ENCODE measurements at regions of chr12 and their contacts with region 1.

Region 1: GRCh38 chr12:69900720-69901131 is 75.7 kb downstream of the MYRFL start:
- DNase-seq: peak; percentile 72
- H3K4me3 ChIP-seq: no peak overlapping the region
- H3K27ac ChIP-seq: peak overlapping the region; percentile 35
- H3K4me1 ChIP-seq: peaks cover 12% of the 10 kb centered on the region
- H3K27me3 ChIP-seq: no peaks in the 10 kb centered on the region
- CTCF ChIP-seq: peak; percentile 62
- POLR2A ChIP-seq: no peak

Region 2: GRCh38 chr12:69873429-69873828 is 27.3 kb before region 1 on chr12:
- CTCF ChIA-PET with region 1: interaction called, 17 read pairs
- POLR2A ChIA-PET with region 1: no interaction called
- dilution Hi-C with region 1: no loop called
- intact Hi-C with region 1: no loop called
- DNase-seq: peak; percentile 87
- H3K4me3 ChIP-seq: no peak overlapping the region
- H3K27ac ChIP-seq: peak overlapping the region; percentile 68
- H3K4me1 ChIP-seq: peaks cover 14% of the 10 kb centered on the region
- H3K27me3 ChIP-seq: no peaks in the 10 kb centered on the region
- CTCF ChIP-seq: no peak
- POLR2A ChIP-seq: no peak

Region 3: DNA sequence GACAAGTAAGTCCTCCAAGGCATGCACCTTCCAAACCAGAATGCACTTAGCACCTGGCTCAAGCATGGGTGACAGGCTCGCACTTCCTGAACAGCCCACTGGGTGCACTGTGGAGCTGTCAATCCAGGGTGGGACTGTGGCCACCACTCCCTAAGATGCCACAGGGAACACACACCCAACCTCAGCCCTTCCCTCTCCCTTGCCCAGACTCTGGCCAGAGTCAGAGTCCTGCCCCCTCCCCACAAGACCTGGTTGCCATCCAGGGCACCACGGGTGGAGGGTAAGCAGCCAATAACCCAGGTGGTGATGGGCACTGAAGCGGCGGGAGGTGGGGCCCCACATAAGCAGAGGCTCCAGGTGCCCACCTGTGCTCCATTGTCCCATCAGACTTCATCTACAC is 84.9 kb after region 1 on chr12:
- CTCF ChIA-PET with region 1: interaction called, 13 read pairs
- POLR2A ChIA-PET with region 1: no interaction called
- dilution Hi-C with region 1: no loop called
- intact Hi-C with region 1: loop called (anchors 5 kb)
- DNase-seq: no peak
- H3K4me3 ChIP-seq: no peak overlapping the region
- H3K27ac ChIP-seq: no peak overlapping the region
- H3K4me1 ChIP-seq: peaks cover 20% of the 10 kb centered on the region
- H3K27me3 ChIP-seq: peaks cover 0 to 2% of the 10 kb centered on the region in 2 experiments
- CTCF ChIP-seq: peak; percentile 18 to 29
- POLR2A ChIP-seq: no peak

Region 4: DNA sequence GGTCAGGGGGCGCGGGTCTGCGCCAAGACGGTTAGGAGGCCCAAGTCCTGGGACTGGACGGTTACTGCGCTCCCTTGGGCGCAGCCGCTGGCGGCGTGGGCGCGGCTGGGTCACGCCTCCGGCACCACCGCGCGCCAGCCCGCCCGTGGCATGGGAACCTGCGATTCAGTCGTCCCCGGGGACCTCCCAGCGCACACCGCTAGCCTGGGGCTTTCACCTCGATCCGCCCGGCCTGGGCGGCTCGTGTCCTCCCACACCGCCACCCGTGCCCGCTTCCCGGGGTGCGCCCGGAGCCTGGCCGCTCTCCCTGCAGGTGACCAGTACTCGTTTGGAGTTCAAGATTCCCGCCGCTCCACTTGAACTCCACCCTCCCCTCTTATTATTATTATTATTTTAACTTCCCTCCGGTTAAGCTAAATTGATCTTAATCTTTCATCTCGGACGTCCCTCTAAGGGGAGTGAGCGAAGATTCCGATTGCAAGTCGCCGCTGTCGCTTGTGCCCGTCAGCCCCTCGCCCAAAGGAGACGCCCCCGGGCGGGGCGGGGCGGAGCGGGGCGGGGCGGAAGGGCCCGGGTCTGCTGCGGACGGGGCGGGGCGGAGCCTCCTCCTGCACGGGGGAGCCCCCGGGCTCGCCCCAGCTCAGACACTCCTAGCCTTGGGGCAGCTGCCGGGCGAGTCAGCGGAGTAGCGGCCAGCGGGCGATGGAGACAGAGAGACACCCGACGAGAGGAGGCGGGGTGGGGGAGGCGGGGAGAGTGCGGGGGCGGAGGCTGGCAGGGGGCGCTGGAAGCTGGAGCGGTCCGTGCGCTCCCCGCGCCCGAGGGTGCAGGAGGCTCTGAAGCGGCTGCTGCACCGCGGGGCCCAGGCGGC is 465.2 kb after region 1 on chr12 and contains the start of gene KCNMB4:
- CTCF ChIA-PET with region 1: interaction called, 8 read pairs
- POLR2A ChIA-PET with region 1: no interaction called
- dilution Hi-C with region 1: no loop called
- intact Hi-C with region 1: loop called (anchors 2 kb)
- DNase-seq: peak; percentile 51
- H3K4me3 ChIP-seq: peak within 1 kb of the TSS; percentile 60 to 67 (median 64)
- H3K27ac ChIP-seq: no peak within 1 kb of the TSS
- H3K4me1 ChIP-seq: peaks cover 14% of the 10 kb centered on the region
- H3K27me3 ChIP-seq: peaks cover 16 to 33% of the 10 kb centered on the region in 2 experiments
- CTCF ChIP-seq: no peak
- POLR2A ChIP-seq: no peak
- total RNA-seq, gene KCNMB4: 0.97 and 2.1 TPM in 2 replicates

Region 5: GRCh38 chr12:70517256-70517655 is 616.5 kb after region 1 on chr12:
- CTCF ChIA-PET with region 1: interaction called, 7 read pairs
- POLR2A ChIA-PET with region 1: interaction called, 3 read pairs
- dilution Hi-C with region 1: no loop called
- intact Hi-C with region 1: loop called (anchors 2 kb)
- DNase-seq: no peak
- H3K4me3 ChIP-seq: no peak overlapping the region
- H3K27ac ChIP-seq: no peak overlapping the region
- H3K4me1 ChIP-seq: peaks cover 7% of the 10 kb centered on the region
- H3K27me3 ChIP-seq: no peaks in the 10 kb centered on the region
- CTCF ChIP-seq: no peak
- POLR2A ChIP-seq: peak; percentile 43

Measured in endothelial cell of umbilical vein (primary cell).